H1 (cell line): ENCODE measurements at regions of chr22 and their contacts with region 1.

Region 1: DNA sequence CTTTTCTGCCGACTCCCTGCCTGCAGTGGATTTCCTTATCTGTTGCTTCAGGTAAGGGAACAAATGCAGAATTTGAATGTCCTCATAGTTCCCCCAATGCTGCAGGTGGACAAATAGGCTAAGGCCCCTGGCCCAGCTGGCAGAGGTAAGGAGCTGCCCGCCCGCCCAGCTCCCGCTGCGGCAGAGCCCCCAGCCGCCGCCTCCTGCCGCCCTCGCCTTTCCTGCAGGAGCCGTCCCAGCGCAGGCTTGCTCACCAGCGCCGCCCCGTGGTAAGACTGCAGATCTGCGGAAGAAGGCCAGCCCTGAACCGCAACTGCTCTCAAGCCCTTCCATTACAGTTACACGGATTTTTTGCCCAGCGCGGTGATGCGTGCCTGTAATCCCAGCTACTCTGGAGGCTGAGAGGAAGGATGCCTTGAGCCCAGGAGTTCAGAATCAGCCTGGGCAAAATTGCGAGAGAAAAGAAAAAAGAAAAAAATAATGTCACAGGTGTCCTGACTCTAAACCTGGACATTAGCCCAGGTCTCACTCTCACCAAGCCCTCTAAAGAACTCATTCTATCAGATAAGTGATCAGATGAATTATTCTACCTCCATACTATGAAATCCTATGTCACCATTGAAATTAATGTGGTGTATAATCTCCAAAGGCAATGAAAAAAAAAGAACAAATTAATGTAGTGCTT is 51.2 kb upstream of the EMID1 start:
- DNase-seq: peak; percentile 39 to 95
- H3K4me3 ChIP-seq: no peak overlapping the region
- H3K27ac ChIP-seq: no peak overlapping the region
- H3K4me1 ChIP-seq: peaks cover 7 to 22% (median 10%) of the 10 kb centered on the region in 4 experiments; a peak in 6 of 7 replicates
- H3K27me3 ChIP-seq: no peaks in the 10 kb centered on the region
- CTCF ChIP-seq: peak; percentile 96 to 97 (median 96)
- EP300 ChIP-seq: no peak
- POLR2A ChIP-seq: no peak
- RAD21 ChIP-seq: peak; percentile 91 to 95

Region 2: DNA sequence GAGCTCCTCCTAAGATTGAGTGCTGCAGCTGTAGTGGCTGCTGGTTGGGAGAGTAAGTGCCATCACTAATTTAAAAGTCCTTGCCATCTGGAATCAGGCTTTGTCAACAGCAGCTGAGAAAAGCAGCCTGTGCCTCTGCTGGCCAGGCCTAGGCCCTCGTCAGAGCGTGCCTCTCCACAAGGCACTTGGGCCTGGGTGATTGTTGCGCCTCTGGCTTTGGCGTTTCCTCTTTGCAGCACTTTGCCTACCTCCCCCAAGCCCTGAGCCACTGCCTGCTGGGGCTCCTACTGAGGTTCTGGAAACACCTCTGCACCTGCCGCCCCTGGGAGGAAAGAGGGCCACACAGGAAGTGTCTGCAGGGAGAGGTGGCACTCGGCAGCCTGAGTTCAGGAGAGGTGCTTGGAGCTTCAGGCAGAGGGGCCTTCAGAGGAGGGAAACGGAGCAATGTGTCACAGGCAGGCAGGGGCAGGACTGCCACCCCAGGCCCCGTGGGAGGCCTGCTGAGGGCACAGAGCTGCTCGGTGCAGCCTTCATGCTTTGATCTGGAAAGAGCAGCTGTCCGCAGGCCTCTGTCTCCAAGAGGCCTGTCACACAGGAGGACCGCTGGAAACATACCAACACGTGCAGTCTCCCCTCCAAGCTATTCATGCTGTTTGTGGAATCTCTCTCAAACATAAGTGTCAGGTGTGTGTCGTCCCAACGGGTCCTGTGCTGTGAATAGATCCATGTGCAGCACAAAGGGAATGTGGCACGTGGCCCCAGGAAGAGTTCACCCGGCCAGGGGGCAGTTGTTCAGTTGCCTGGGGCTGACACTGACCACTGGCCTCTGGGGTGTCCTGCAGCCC is 10.3 kb before region 1 on chr22:
- CTCF ChIA-PET with region 1: interaction called, 79 read pairs
- POLR2A ChIA-PET with region 1: interaction called, 4 read pairs
- DNase-seq: peak in 1 of 2 experiments; percentile 45
- H3K4me3 ChIP-seq: no peak overlapping the region
- H3K27ac ChIP-seq: no peak overlapping the region
- H3K4me1 ChIP-seq: peaks cover 9 to 24% (median 15%) of the 10 kb centered on the region in 4 experiments
- H3K27me3 ChIP-seq: no peaks in the 10 kb centered on the region
- CTCF ChIP-seq: no peak
- EP300 ChIP-seq: no peak
- POLR2A ChIP-seq: no peak
- RAD21 ChIP-seq: no peak

Region 3: DNA sequence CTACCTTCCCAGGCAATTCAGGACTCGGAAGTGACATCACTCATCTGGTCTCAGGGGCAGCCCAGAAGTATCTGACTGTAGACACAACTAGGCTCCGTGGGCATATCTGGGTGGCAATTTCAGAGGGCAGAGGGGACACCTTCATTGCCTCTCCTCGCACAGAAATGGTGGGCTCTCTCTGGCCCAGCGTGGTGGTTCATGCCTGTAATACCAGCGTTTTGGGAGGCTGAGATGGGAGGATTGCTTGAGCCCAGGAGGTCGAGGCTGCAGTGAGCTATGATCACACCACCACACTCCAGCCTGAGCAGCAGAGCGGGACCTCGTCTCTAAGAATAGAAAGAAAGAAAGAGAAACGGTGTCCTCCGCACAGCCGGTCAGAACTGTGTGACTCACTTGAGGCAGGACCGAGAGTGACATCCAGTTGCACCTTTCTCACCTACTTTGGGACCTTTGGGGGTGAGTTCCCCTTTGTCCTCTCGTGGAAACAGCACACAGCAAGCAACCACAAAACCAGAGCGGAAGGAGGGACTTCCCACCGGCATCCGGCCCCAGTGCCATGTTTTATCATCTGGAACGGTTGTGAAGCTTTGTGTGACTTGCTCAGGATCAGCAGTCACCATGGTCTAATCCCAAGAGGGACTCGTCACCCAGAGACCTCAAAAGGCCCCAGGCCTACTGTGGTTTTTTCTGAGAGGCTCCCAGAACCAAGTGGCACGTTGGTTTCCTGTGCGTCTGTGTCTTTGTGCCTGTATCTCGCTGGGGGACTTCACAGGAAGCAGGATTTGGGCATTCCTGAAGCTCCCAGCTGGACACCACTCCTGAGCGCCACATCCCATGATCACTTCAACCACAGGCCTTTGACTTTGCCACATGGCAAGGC is 12.8 kb after region 1 on chr22:
- CTCF ChIA-PET with region 1: interaction called, 19 read pairs
- POLR2A ChIA-PET with region 1: no interaction called
- DNase-seq: no peak
- H3K4me3 ChIP-seq: no peak overlapping the region
- H3K27ac ChIP-seq: no peak overlapping the region
- H3K4me1 ChIP-seq: no peaks in the 10 kb centered on the region
- H3K27me3 ChIP-seq: no peaks in the 10 kb centered on the region
- CTCF ChIP-seq: no peak
- EP300 ChIP-seq: no peak
- POLR2A ChIP-seq: no peak
- RAD21 ChIP-seq: no peak

Region 4: DNA sequence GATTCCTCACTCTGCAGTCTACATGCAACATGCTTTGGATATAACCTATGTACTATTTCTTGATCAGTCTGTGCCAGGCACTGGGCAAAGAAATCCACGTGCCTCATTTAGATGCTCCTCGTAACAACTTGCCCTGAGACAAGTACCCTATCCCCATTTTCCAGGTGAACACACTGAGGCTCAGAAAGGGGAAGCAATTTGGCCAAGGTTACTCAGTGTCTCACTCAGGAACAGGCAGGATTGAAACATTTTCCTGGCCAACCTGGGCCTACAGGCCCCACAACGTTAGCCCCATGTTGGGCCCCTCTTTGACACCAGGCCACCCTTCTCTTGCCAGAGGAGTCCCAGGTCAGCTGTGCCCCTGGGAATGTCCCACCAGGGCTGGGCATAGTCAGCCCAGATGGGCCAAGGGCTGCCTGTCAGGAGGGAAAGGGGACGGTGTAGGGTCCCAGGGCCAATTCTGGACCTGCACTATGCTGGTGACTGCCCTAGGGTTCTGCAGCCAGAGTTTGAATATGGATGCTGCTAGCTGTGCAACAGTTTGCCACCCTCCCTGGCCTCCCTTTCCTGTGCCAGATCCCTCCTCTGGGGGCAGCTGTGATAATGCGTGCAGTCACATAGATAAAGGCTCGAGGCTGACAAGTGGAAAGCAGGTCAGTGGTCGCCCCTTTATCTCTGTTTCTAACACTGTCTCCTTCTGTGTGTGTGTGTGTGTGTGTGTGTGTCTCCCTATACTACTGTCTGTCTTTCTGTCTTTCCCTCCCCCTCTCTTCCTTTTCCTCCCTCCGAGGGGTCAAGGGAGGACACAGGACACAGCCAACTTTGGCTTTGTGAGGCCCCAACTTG is 40.8 kb after region 1 on chr22:
- CTCF ChIA-PET with region 1: interaction called, 10 read pairs
- POLR2A ChIA-PET with region 1: no interaction called
- DNase-seq: no peak
- H3K4me3 ChIP-seq: no peak overlapping the region
- H3K27ac ChIP-seq: no peak overlapping the region; the same call in 1 of the 2 replicates
- H3K4me1 ChIP-seq: no peaks in the 10 kb centered on the region
- H3K27me3 ChIP-seq: no peaks in the 10 kb centered on the region
- CTCF ChIP-seq: no peak
- EP300 ChIP-seq: no peak
- POLR2A ChIP-seq: no peak
- RAD21 ChIP-seq: no peak